ENCODE measurements at regions of chr3 and their contacts with region 1.

Region 1: DNA sequence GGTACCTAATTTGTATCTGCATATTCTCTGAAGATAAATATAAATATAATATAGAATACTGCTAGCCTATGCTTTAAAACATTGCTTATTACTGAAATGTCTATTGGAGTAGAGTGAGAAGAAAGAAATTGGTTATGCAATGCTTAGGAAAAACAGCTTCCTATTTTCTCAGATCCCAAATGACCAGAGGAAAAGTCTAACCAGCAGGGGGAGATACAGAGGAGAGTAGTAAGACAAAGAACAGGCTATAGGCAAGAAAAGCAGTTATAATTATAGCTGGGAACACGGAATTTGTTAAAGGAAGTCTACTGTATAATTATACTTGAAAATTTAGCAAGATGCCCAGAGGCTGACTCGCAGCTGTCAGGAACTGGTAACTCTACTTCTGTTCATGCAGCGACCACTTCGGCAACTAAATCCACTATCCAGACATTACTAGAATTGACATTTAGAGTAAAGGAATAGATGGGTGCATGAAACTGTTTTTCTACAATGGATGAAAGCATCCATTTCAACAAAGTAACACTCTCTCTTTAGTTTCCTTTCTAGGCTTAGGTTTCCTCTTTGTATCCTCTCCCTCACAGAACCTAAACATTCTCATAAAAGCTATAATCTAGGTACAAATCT is 97.2 kb downstream of the TBC1D5 start:
- DNase-seq: no peak
- ATAC-seq: no peak

Region 2: DNA sequence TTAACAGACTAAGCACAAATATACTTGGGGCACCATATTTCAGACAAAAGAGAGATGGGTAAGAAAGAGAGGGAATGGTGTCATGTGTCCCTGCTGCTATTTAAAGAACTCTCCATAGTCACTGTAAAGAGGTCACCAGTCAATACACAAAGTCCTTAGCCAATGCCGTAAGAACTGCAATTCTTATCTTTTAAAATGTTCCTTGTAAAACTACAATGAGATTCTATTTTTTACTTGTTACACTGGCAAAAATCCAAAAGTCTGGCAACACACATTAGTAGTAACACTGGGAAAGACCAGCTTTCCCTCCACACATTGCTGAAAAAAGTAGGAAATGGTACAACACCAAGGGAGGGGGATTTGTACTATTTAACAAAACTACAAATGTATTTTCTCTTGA is 92.1 kb before region 1 on chr3:
- intact Hi-C with region 1: loop called (anchors 10 kb)
- DNase-seq: no peak
- ATAC-seq: peak; percentile 88

Region 3: GRCh38 chr3:17742108-17742879 is 97.1 kb after region 1 on chr3 and contains the start of gene TBC1D5:
- intact Hi-C with region 1: loop called (anchors 2 kb)
- DNase-seq: peak; percentile 99
- ATAC-seq: peak; percentile 96
- total RNA-seq, gene TBC1D5: 34.4 TPM

Region 4: DNA sequence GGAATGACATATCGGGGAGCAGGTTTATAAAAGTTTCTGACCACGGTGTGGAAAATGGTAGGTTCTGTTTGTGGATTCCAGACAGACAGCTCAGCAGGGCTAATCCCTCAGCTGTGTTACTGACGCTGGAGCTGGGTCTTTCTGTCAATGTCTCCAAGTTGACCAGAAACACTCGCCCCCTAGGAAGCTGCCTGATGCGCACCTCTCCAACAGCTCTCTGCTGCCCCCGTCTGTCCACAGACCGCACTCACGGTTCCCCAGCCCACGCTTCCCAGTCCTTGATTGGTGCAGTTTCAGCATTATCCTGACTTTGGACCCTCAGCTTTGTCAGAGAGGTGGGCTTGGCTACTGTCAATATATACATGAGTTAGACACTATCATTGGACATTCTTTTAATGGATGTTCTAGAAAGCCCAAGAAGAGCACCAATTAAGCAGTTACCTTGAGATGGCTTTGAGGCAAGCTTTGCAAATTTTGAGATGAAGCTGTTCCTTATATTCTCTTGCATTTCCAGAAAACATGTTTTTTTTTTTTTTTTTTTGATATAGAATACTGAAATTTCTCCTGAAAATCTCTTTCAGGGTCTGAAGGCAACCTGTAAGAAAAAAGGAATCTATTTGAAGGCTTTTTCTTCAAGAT is 196.1 kb after region 1 on chr3:
- intact Hi-C with region 1: loop called (anchors 2 kb)
- DNase-seq: peak; percentile 79
- ATAC-seq: peak; percentile 78